Activated naive CD4-positive, alpha-beta T cell treated with anti-CD3 and anti-CD28 coated beads for 36 hours (primary cell): ENCODE measurements at regions of chr15 and their contacts with region 1.

Region 1: DNA sequence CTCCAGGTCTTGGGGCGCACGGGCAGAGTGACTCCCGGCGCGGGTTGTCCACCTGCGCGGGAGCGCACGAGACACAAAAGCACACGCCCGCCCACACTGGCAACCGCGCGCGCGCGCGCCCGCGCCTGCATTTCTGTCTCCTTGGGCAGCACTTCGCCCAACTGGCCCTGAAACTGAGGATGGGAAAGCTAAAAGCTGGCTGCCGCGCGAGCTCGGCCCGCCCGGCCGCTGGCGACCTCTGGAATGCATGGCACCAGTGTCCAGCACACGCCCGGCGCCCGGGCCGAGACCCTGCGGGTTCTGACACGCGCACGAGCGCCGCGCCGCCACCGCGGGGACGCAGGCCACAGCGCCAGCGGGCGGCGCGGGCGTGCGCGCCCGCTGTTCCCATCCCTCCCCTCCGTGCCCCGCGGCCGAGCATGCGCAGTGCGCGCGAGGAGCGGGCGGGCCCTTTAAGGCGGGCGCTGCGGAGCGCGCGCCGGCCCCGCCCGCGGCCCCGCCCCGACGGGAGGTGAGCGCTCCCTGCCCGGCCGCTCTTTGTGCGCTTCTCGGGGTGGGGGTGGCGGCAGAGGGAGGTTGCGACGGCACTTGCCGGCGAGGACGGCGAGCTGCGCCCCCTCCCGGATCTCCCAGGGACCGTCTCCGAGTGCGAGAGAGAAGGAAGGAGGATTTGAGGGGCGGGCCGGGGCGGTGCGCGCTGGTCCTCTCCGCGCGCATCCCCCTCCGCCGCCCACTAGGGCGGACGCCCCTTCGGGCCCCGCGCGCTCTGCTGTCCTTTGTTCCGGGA is 1.0 kb upstream of the MEX3B start:
- DNase-seq: peak; percentile 93
- H3K4me3 Mint-ChIP-seq: peak overlapping the region; percentile 84
- H3K27ac Mint-ChIP-seq: peak overlapping the region; percentile 74
- H3K4me1 Mint-ChIP-seq: peaks cover 10% of the 10 kb centered on the region
- H3K27me3 Mint-ChIP-seq: peaks cover 29% of the 10 kb centered on the region

Region 2: GRCh38 chr15:80695104-80695910 is 1351.6 kb before region 1 on chr15 and contains the start of gene ABHD17C:
- CTCF ChIA-PET with region 1: no interaction called
- intact Hi-C with region 1: loop called (anchors 10 kb)
- DNase-seq: peak; percentile 45
- H3K4me3 Mint-ChIP-seq: peak within 1 kb of the TSS; percentile 93
- H3K27ac Mint-ChIP-seq: peak within 1 kb of the TSS; percentile 12
- H3K4me1 Mint-ChIP-seq: peaks cover 15% of the 10 kb centered on the region
- H3K27me3 Mint-ChIP-seq: peaks cover 3% of the 10 kb centered on the region
- total RNA-seq, gene ABHD17C: 6.5 to 7.3 TPM

Region 3: GRCh38 chr15:81000624-81001151 is 1046.2 kb before region 1 on chr15 and contains the start of gene TLNRD1:
- CTCF ChIA-PET with region 1: no interaction called
- intact Hi-C with region 1: loop called (anchors 5 kb)
- DNase-seq: peak; percentile 92
- H3K4me3 Mint-ChIP-seq: peak within 1 kb of the TSS; percentile 86
- H3K27ac Mint-ChIP-seq: peak within 1 kb of the TSS; percentile 94
- H3K4me1 Mint-ChIP-seq: peaks cover 40% of the 10 kb centered on the region
- H3K27me3 Mint-ChIP-seq: no peaks in the 10 kb centered on the region
- total RNA-seq, gene TLNRD1: 15.9 to 16.6 TPM

Region 4: DNA sequence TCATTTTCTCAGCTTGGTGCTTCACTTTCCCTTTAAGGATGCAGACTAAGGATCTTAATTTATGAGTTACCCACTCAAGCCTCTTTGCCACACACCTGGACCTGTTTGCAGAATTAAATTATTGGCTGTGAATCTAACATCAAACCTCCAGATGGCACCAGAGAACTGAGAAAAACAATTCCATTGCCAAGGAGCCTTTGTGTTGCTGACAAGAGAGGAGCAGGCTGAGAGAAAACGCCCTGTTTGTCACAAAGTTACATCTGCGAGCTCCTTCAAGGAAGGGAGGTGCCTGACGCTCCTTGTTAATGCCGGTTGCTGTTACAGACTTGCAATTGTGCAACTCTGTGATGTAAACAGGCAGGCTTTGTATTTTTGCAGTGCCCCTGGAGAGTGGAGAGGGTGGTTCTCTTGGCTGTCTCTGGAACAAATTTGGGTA is 636.5 kb before region 1 on chr15:
- CTCF ChIA-PET with region 1: no interaction called
- intact Hi-C with region 1: loop called (anchors 1 kb)
- DNase-seq: peak; percentile 31
- H3K4me3 Mint-ChIP-seq: no peak overlapping the region
- H3K27ac Mint-ChIP-seq: no peak overlapping the region
- H3K4me1 Mint-ChIP-seq: peaks cover 12% of the 10 kb centered on the region
- H3K27me3 Mint-ChIP-seq: peaks cover 14% of the 10 kb centered on the region

Region 5: GRCh38 chr15:82021992-82022391 is 24.9 kb before region 1 on chr15:
- CTCF ChIA-PET with region 1: no interaction called
- intact Hi-C with region 1: no loop called
- DNase-seq: no peak
- H3K4me3 Mint-ChIP-seq: no peak overlapping the region
- H3K27ac Mint-ChIP-seq: no peak overlapping the region
- H3K4me1 Mint-ChIP-seq: no peaks in the 10 kb centered on the region
- H3K27me3 Mint-ChIP-seq: peaks cover 6% of the 10 kb centered on the region

Region 6: DNA sequence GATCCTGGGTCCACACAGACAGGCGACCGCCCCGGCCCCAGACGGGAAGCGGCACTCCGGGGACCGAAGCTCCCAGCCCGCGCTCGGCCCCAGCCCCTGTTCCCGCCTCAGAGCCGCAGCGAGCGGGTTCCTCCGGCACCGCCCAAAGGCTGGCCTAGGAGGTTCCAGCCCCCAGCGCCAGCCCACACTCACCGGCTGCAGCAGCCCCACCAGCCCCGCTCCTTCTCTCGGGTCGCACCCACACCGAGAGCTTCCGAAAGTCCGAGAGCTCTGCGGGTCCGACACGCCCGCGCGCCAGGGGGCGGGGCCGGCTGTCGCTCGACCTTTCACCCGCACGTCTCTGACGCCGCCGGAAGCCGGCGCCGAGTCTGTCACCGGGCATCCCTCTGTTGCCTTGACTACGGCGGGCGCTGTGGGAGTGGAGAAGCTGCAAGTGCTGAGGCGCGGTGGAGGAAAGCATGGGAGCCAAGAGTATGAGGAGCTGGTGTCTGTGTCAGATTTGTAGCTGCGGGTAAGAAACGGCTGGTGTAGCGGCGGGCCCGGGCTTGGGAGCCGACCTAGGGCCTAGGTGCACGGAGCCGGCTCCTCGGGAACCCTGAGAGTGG is 215.7 kb after region 1 on chr15 and contains the starts of genes EFL1 and SAXO2:
- CTCF ChIA-PET with region 1: no interaction called
- intact Hi-C with region 1: loop called (anchors 10 kb)
- DNase-seq: peak; percentile 94
- H3K4me3 Mint-ChIP-seq: peak within 1 kb of the TSS; percentile 93
- H3K27ac Mint-ChIP-seq: peak within 1 kb of the TSS; percentile 71
- H3K4me1 Mint-ChIP-seq: peaks cover 25% of the 10 kb centered on the region
- H3K27me3 Mint-ChIP-seq: no peaks in the 10 kb centered on the region
- total RNA-seq, gene EFL1: 15.8 to 18.6 TPM
- total RNA-seq, gene SAXO2: 0.69 to 0.79 TPM